Endothelial cell of umbilical vein (primary cell): ENCODE measurements at regions of chr11 and their contacts with region 1.

Region 1: DNA sequence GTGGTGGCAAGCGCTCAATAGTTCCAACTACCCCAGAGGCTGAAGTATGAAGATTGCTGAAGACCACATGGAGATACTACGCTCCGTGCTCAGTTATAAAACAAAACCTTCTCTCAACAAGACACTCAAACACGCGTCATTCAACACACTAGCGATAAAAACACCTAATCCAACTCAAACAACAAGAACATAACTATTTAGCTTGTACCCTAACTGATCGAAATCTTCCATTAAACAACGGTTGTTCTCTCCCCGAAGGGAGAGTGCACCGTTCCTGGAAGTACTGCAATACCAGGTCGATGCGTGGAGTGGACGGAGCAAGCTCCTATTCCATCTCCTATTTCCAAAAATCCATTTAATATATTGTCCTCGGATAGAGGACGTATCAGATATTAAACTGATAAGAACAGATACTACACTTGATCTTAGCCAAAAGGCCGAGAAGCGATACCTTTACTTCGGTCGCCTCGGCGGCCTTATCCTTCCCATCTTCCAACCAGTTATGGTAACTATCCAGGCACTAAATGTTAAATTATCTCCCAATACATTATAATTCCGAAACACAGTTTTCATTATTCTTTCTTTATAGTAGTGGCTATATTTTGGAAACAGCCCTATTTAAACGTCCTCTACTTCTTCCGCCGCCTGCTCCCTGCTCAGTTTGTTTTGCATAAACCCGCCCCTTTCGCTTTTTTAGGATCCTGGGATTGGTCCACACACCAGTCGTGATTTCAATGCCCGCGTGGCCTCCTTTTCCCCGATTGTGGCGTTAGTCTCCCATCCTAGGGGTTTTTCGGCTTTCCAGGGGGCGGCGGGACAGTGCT is 2.2 kb upstream of the WDR74 start:
- DNase-seq: peak; percentile 99
- H3K4me3 ChIP-seq: peak overlapping the region in 2 of 3 experiments; percentile 9 to 15
- H3K27ac ChIP-seq: peak overlapping the region; percentile 89
- H3K4me1 ChIP-seq: peaks cover 7% of the 10 kb centered on the region
- H3K27me3 ChIP-seq: no peaks in the 10 kb centered on the region
- CTCF ChIP-seq: no peak
- POLR2A ChIP-seq: peak; percentile 100

Region 2: DNA sequence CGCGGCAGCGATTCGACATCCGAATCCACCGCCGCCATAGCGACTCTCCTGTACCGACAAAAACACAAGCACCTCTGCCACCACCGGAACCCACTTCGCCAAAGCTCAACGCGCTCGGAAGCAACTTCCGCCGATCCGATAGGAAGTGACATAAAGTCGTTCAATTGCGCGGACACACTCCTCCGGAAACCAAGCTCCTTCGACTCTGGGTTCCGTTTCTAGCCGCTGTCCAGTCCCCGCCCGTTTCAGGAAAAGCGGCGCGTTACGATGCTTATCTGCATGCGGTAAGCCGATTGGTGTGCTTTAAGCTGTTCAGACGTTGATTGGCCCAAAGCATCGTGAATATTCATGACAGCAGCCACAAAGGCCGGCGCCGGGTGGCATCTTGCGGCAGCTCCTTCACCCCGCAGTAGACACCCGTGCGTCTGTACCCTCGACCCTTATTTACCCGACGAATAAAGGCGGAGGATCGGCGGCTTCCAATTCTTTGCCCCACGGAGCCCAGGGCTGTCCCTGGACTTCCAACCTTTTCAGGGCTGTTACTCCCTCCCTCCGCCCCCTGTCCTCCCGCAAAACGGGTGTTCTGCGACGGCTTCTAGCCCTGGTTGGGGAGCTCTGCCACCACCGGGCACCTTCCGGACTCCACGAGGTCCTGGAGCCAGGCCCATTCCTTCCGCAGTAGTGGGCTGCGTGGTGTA is 250.0 kb before region 1 on chr11 and contains the start of gene TUT1:
- CTCF ChIA-PET with region 1: no interaction called
- POLR2A ChIA-PET with region 1: interaction called, 10 read pairs
- dilution Hi-C with region 1: no loop called
- intact Hi-C with region 1: loop called (anchors 5 kb)
- DNase-seq: peak; percentile 99
- H3K4me3 ChIP-seq: peak within 1 kb of the TSS; percentile 67 to 87 (median 82)
- H3K27ac ChIP-seq: peak within 1 kb of the TSS; percentile 82
- H3K4me1 ChIP-seq: peaks cover 18% of the 10 kb centered on the region
- H3K27me3 ChIP-seq: no peaks in the 10 kb centered on the region
- CTCF ChIP-seq: no peak
- POLR2A ChIP-seq: peak; percentile 99
- total RNA-seq, gene TUT1: 16.9 and 17.8 TPM in 2 replicates

Region 3: GRCh38 chr11:62753736-62754603 is 87.6 kb before region 1 on chr11 and contains the start of gene ZBTB3:
- CTCF ChIA-PET with region 1: interaction called, 3 read pairs
- POLR2A ChIA-PET with region 1: interaction called, 22 read pairs
- dilution Hi-C with region 1: no loop called
- intact Hi-C with region 1: no loop called
- DNase-seq: peak; percentile 100
- H3K4me3 ChIP-seq: peak within 1 kb of the TSS; percentile 32 to 71 (median 67)
- H3K27ac ChIP-seq: peak within 1 kb of the TSS; percentile 61
- H3K4me1 ChIP-seq: peaks cover 5% of the 10 kb centered on the region
- H3K27me3 ChIP-seq: no peaks in the 10 kb centered on the region
- CTCF ChIP-seq: no peak
- POLR2A ChIP-seq: peak; percentile 75
- total RNA-seq, gene ZBTB3: 6.9 and 8.1 TPM in 2 replicates

Region 4: DNA sequence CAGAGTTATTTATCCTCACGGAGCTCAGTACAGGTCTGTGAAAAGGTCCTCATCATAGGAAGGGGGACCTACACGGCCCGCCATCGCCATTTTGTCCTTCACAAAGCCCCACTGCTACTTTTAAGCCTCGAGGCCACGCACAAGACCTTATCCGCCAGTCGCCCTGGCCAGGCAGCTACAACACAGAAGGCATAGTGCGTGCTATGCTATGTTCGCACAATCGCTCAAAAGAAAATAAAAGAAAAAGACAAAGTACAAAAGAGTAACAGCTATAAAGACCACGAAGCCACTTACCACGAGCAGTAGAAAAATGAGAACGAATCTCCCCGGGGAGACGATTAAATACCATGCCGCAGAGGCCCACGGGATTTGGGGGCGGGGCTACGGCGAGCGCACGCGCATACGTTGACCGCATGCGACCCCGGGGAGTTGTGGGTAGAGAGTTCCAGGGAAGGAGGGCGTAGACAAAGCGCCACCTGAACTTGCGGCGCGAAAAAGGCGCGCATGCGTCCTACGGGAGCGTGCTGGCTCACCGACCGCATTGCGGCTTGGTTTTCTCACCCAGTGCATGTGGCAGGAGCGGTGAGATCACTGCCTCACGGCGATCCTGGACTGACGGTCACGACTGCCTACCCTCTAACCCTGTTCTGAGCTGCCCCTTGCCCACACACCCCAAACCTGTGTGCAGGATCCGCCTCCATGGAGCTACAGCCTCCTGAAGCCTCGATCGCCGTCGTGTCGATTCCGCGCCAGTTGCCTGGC is 14.2 kb after region 1 on chr11:
- CTCF ChIA-PET with region 1: interaction called, 6 read pairs
- POLR2A ChIA-PET with region 1: interaction called, 186 read pairs
- dilution Hi-C with region 1: no loop called
- intact Hi-C with region 1: loop called (anchors 1 kb)
- DNase-seq: peak; percentile 98
- H3K4me3 ChIP-seq: peak overlapping the region; percentile 61 to 94 (median 87)
- H3K27ac ChIP-seq: peak overlapping the region; percentile 54
- H3K4me1 ChIP-seq: peaks cover 24% of the 10 kb centered on the region
- H3K27me3 ChIP-seq: no peaks in the 10 kb centered on the region
- CTCF ChIP-seq: no peak
- POLR2A ChIP-seq: peak; percentile 100

Region 5: GRCh38 chr11:62875698-62876478 is 34.3 kb after region 1 on chr11:
- CTCF ChIA-PET with region 1: interaction called, 7 read pairs
- POLR2A ChIA-PET with region 1: interaction called, 25 read pairs
- dilution Hi-C with region 1: no loop called
- intact Hi-C with region 1: loop called (anchors 1 kb)
- DNase-seq: no peak
- H3K4me3 ChIP-seq: no peak overlapping the region
- H3K27ac ChIP-seq: no peak overlapping the region
- H3K4me1 ChIP-seq: peaks cover 12% of the 10 kb centered on the region
- H3K27me3 ChIP-seq: no peaks in the 10 kb centered on the region
- CTCF ChIP-seq: no peak
- POLR2A ChIP-seq: no peak

Region 6: DNA sequence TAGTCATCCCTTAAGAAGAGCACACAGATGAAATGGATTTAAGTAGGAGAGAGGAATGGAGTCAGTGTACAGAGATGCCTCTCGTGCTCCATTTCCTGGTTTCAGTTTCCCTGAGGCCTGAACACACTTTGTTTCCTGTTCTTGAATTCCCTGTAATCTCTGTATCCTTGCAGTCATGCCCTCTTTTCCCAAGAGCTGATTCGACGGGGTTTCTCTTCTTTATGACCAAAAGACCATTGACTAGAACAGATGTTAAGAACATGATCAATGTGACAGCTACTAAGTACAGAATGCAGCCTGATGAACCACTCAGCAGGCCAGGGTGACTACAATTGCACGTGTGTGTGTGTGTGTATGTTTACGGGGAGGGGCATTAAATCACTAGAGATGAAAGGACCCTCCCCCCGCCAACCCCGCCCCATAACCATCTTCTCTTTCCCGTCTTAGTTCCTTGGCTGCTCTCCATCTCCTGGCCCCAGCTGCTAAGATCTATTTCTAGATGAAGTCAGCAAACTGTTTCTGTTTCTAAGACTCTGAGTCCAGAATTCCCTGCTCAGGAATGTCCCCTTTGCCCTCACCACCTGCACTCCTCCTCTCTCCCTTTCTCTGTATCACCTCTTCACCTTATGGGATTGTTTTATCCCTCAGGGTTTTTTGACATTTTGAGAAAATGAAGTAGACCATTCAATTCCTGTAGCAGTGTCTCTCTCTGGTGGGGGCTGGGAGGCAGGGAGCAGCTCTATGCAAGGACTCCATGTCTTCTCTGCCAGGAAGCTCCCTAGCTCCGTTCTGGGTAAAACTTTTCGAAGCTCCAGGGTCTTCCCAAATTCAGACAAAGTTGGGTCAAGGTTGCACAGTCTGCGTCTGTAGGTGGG is 117.2 kb after region 1 on chr11:
- CTCF ChIA-PET with region 1: no interaction called
- POLR2A ChIA-PET with region 1: no interaction called
- dilution Hi-C with region 1: no loop called
- intact Hi-C with region 1: no loop called
- DNase-seq: peak; percentile 24
- H3K4me3 ChIP-seq: no peak overlapping the region
- H3K27ac ChIP-seq: no peak overlapping the region
- H3K4me1 ChIP-seq: no peaks in the 10 kb centered on the region
- H3K27me3 ChIP-seq: no peaks in the 10 kb centered on the region
- CTCF ChIP-seq: no peak
- POLR2A ChIP-seq: no peak